ENCODE measurements at regions of chr1 and their contacts with region 1.

Region 1: GRCh38 chr1:31984419-31985347 is 29.0 kb upstream of the KHDRBS1 start:
- DNase-seq: peak; percentile 65
- H3K4me3 Mint-ChIP-seq: peak overlapping the region; percentile 44
- H3K27ac Mint-ChIP-seq: peak overlapping the region; percentile 92
- H3K4me1 Mint-ChIP-seq: peaks cover 52% of the 10 kb centered on the region
- H3K27me3 Mint-ChIP-seq: no peaks in the 10 kb centered on the region

Region 2: GRCh38 chr1:32005522-32005921 is 20.8 kb after region 1 on chr1:
- CTCF ChIA-PET with region 1: interaction called, 6 read pairs
- intact Hi-C with region 1: loop called (anchors 1 kb)
- DNase-seq: no peak
- H3K4me3 Mint-ChIP-seq: no peak overlapping the region
- H3K27ac Mint-ChIP-seq: no peak overlapping the region
- H3K4me1 Mint-ChIP-seq: peaks cover 4% of the 10 kb centered on the region
- H3K27me3 Mint-ChIP-seq: no peaks in the 10 kb centered on the region

Region 3: DNA sequence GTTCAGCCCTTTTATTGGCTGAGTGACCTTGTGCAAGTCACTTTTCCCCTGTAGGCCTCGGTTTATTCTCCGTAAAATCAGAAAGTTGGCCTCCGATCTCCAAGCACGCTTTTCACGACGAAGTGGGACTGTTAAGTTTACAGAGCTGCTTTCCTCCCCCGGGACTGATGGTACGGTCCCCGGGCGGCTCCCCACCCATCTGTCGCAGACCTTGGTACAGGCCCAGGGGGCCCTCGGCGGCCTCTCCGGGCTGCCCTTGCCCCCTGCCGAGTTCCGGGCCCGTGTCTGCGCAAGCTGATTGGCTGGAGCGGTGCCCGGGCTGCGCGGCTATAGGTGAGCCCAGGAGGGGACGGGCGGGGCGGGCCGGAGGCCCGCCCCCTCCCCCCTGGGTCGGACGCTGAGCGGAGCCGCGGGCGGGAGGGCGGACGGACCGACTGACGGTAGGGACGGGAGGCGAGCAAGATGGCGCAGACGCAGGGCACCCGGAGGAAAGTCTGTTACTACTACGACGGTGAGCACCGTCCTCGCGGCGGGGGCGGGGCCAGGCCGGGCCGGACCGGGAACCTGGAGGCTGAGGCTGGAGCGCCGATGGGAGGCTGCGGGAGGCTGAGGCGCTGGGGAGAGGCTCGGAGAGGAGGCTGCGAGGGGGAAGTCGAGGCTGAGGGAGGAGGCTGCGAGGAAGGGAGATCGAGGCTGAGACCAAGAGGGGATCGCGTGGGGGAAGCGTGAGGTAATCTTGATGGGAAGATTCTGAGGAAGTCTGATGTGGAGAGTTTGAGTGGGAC is 307.2 kb after region 1 on chr1 and contains the start of gene HDAC1:
- CTCF ChIA-PET with region 1: no interaction called
- intact Hi-C with region 1: no loop called
- DNase-seq: peak; percentile 97
- H3K4me3 Mint-ChIP-seq: peak within 1 kb of the TSS; percentile 100
- H3K27ac Mint-ChIP-seq: peak within 1 kb of the TSS; percentile 98
- H3K4me1 Mint-ChIP-seq: peaks cover 48% of the 10 kb centered on the region
- H3K27me3 Mint-ChIP-seq: no peaks in the 10 kb centered on the region
- total RNA-seq, gene HDAC1: 111 to 120 TPM